K562 (cell line): ENCODE measurements at regions of chr5 and their contacts with region 1.

Region 1: DNA sequence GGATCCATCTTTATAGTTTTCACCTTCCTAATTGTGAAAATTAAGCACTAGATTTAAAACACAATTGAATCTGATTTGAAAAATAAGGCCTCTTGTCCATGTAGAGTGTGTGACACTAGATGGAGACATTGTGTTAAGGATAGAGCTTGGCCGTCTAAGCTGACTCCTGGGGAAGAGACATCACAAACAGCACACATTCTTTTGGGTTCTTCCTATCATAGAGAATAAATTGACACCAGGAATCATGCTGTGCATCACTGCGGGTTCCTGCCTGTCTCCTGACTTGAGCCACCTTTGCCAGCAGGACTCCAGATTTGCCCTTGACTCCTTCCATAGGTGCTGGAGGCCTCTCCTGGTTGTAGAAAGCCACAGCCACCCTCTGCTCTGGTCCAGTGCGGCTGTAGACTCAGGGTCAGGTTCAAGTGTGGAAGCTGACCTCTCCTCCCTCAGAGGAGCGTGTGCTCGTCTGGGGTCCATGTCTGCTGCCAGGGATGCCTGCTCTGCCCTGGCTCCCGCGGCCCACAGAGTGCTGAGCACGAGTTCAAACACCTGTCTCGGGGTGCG is 11.2 kb downstream of the ROPN1L start:
- DNase-seq: peak; percentile 68 to 80 (median 72)
- ATAC-seq: peak; percentile 83
- H3K4me3 ChIP-seq: no peak overlapping the region
- H3K27ac ChIP-seq: no peak overlapping the region
- H3K4me1 ChIP-seq: peaks cover 0 to 16% of the 10 kb centered on the region in 2 experiments; a peak in 2 of 5 replicates
- H3K27me3 ChIP-seq: peaks cover 29 to 39% of the 10 kb centered on the region in 2 experiments; a peak in 4 of 5 replicates
- CTCF ChIP-seq: peak; percentile 76 to 96 (median 88)
- EP300 ChIP-seq: no peak
- POLR2A ChIP-seq: no peak
- RAD21 ChIP-seq: peak; percentile 99 to 100

Region 2: DNA sequence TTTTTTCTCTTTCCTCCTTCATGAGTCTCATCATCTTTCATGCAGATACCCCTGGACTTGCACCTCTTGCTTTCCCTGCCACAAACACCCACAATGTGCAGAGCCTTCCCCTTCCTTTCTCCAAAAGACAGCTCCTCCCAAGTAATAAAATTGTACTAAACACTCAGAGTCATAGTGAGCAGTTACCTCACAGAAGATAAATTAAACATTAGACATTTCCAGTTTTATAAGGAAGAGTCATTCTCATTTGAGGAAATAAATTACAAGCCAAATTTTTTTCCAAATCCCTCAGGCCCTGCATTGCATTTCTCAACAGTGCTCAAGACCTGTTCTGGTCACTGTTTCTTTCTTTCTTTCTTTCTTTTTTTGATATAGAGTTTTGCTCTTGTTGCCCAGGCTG is 334.7 kb before region 1 on chr5:
- CTCF ChIA-PET with region 1: no interaction called
- POLR2A ChIA-PET with region 1: no interaction called
- in situ Hi-C with region 1: no loop called
- intact Hi-C with region 1: no loop called
- DNase-seq: no peak
- ATAC-seq: no peak
- H3K4me3 ChIP-seq: no peak overlapping the region
- H3K27ac ChIP-seq: no peak overlapping the region
- H3K4me1 ChIP-seq: no peaks in the 10 kb centered on the region
- H3K27me3 ChIP-seq: peaks cover 2 to 13% of the 10 kb centered on the region in 2 experiments; a peak in 3 of 5 replicates
- CTCF ChIP-seq: no peak
- EP300 ChIP-seq: no peak
- POLR2A ChIP-seq: no peak
- RAD21 ChIP-seq: no peak

Region 3: GRCh38 chr5:10627160-10627701 is 174.4 kb after region 1 on chr5:
- CTCF ChIA-PET with region 1: interaction called, 69 read pairs
- POLR2A ChIA-PET with region 1: no interaction called
- in situ Hi-C with region 1: loop called (anchors 5 kb)
- intact Hi-C with region 1: loop called (anchors 1 kb)
- DNase-seq: peak in 2 of 4 experiments; percentile 48 to 49
- ATAC-seq: peak; percentile 40
- H3K4me3 ChIP-seq: peak overlapping the region; percentile 34; the same call in 1 of the 2 replicates
- H3K27ac ChIP-seq: no peak overlapping the region
- H3K4me1 ChIP-seq: peaks cover 3 to 17% of the 10 kb centered on the region in 2 experiments; a peak in 3 of 5 replicates
- H3K27me3 ChIP-seq: peaks cover 18 to 44% of the 10 kb centered on the region in 2 experiments
- CTCF ChIP-seq: no peak
- EP300 ChIP-seq: no peak
- POLR2A ChIP-seq: no peak
- RAD21 ChIP-seq: no peak

Region 4: GRCh38 chr5:10689391-10690081 is 236.7 kb after region 1 on chr5:
- CTCF ChIA-PET with region 1: interaction called, 21 read pairs
- POLR2A ChIA-PET with region 1: no interaction called
- in situ Hi-C with region 1: no loop called
- intact Hi-C with region 1: loop called (anchors 1 kb)
- DNase-seq: peak; percentile 56 to 71 (median 67)
- ATAC-seq: peak; percentile 85
- H3K4me3 ChIP-seq: no peak overlapping the region
- H3K27ac ChIP-seq: no peak overlapping the region; the same call in 2 of the 3 replicates
- H3K4me1 ChIP-seq: peaks cover 6 to 12% of the 10 kb centered on the region in 2 experiments; a peak in 4 of 5 replicates
- H3K27me3 ChIP-seq: no peaks in the 10 kb centered on the region
- CTCF ChIP-seq: peak; percentile 72 to 75 (median 73)
- EP300 ChIP-seq: no peak
- POLR2A ChIP-seq: no peak
- RAD21 ChIP-seq: peak; percentile 19 to 74; a peak in 2 of 4 replicates

Region 5: DNA sequence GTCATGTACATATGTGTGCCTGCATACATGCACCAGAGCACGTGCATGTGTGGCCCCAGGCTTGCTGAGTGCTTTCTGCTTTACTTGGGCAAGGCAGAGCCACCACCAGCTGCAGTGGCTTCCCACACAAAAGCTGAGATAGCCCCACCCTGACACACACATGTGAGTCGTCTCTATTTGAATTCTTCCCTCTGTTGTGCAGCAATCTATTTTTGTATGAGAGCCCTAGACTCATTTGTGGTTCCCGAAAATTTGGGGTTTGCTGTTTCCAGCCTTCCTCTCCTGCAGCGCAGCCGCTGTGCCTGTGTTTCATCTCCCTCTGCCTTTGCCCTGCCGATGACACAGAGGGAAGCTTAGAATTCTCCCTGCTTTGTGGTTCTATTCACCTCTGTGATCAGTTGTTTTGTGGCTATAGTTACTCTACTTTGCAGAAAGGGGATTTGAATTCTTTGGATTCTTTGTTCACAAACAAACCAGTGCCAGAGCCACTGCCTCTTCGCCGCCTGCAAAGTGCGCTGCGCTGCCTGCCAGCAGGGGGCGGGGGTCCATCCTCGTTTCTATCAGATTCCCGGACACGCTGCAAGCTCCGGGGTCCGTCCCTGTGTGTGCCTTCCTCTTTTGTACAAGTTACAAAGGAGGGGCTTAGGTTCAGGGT is 404.0 kb after region 1 on chr5:
- CTCF ChIA-PET with region 1: no interaction called
- POLR2A ChIA-PET with region 1: no interaction called
- in situ Hi-C with region 1: no loop called
- intact Hi-C with region 1: loop called (anchors 10 kb)
- DNase-seq: peak; percentile 61 to 73 (median 64)
- ATAC-seq: peak; percentile 86
- H3K4me3 ChIP-seq: no peak overlapping the region
- H3K27ac ChIP-seq: no peak overlapping the region
- H3K4me1 ChIP-seq: peaks cover 0 to 4% of the 10 kb centered on the region in 2 experiments; a peak in 1 of 5 replicates
- H3K27me3 ChIP-seq: peaks cover 24 to 69% of the 10 kb centered on the region in 2 experiments
- CTCF ChIP-seq: peak; percentile 75 to 94 (median 78)
- EP300 ChIP-seq: no peak
- POLR2A ChIP-seq: no peak
- RAD21 ChIP-seq: peak in 1 of 2 experiments; percentile 54; a peak in 2 of 4 replicates

Region 6: GRCh38 chr5:11166923-11167322 is 714.1 kb after region 1 on chr5:
- CTCF ChIA-PET with region 1: no interaction called
- POLR2A ChIA-PET with region 1: no interaction called
- in situ Hi-C with region 1: loop called (anchors 25 kb)
- intact Hi-C with region 1: no loop called
- DNase-seq: no peak
- ATAC-seq: no peak
- H3K4me3 ChIP-seq: no peak overlapping the region
- H3K27ac ChIP-seq: no peak overlapping the region
- H3K4me1 ChIP-seq: no peaks in the 10 kb centered on the region
- H3K27me3 ChIP-seq: no peaks in the 10 kb centered on the region
- CTCF ChIP-seq: no peak
- EP300 ChIP-seq: no peak
- POLR2A ChIP-seq: no peak
- RAD21 ChIP-seq: no peak